ENCODE measurements at regions of chr5 and their contacts with region 1.

Region 1: DNA sequence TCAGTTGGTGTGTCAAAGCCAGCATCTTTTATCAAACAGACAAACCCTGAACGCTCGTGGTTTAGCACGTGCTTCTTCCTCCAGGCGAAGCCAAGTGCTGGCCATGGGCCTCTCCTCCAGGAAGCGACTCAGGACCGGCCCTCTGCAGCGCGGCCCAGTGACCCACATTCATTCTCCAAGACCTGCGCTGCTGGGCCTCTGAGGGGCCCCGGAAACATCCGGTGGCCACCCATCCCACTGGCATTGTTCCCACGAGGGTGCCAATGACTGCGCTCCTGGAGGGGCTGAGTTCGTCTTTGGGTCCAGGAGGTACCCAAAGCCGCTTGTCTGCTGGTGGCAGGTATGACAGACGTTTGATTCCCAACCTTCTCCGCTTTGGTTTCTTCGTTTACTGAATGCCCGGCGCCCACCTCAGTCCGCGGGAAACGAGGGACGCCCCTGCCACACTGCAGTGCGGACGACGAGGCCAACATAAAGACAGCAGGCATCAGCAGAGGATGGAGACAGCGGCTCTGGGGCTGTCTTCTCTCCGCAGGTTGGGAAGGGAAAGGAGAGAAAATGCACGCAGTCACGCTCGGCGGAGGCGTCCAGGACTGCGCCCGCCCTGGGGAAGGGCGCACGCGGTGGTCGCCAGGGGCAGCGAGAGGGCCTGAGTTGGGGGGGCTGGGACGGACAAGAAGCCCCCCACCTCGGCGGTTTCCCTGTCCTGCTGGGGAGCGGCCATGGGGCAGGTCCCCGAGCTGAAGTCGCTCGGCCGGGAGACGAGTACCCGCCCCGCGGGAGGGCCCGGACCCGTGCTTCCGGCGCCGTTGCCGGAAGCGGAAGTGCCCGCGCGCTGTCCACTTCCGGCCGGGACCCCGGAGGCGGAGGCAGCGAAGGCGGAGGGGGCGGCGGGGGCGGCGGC is at the start of gene EXOC3:
- DNase-seq: peak; percentile 60 to 83 (median 67)
- ATAC-seq: peak; percentile 87
- H3K4me3 ChIP-seq: peak within 1 kb of the TSS; percentile 88
- H3K4me3 Mint-ChIP-seq: peak within 1 kb of the TSS; percentile 89 to 98 (median 96)
- H3K27ac ChIP-seq: peak within 1 kb of the TSS; percentile 87
- H3K27ac Mint-ChIP-seq: peak within 1 kb of the TSS; percentile 88 to 98 (median 94)
- H3K4me1 ChIP-seq: peaks cover 12 to 18% of the 10 kb centered on the region in 2 donors
- H3K4me1 Mint-ChIP-seq: peaks cover 24 to 44% (median 32%) of the 10 kb centered on the region in 7 donors
- H3K27me3 ChIP-seq: no peaks in the 10 kb centered on the region
- H3K27me3 Mint-ChIP-seq: peaks cover 0 to 3% (median 0%) of the 10 kb centered on the region in 5 donors
- total RNA-seq, gene EXOC3: 79.1 to 105 (median 89.8) TPM

Region 2: GRCh38 chr5:217860-218456 is 224.6 kb before region 1 on chr5 and contains the starts of genes CCDC127 and SDHA:
- CTCF ChIA-PET with region 1: no interaction called
- POLR2A ChIA-PET with region 1: interaction called, 4 read pairs
- intact Hi-C with region 1: loop called (anchors 1 to 5 kb)
- DNase-seq: peak; percentile 94 to 100 (median 98)
- ATAC-seq: peak; percentile 90
- H3K4me3 ChIP-seq: peak within 1 kb of the TSS; percentile 65
- H3K4me3 Mint-ChIP-seq: peak within 1 kb of the TSS; percentile 93 to 97 (median 96)
- H3K27ac ChIP-seq: peak within 1 kb of the TSS; percentile 92
- H3K27ac Mint-ChIP-seq: peak within 1 kb of the TSS; percentile 87 to 97 (median 95)
- H3K4me1 ChIP-seq: peaks cover 13 to 14% of the 10 kb centered on the region in 2 donors
- H3K4me1 Mint-ChIP-seq: peaks cover 44 to 69% (median 57%) of the 10 kb centered on the region in 7 donors
- H3K27me3 ChIP-seq: no peaks in the 10 kb centered on the region
- H3K27me3 Mint-ChIP-seq: peaks cover 0 to 2% (median 0%) of the 10 kb centered on the region in 5 donors
- total RNA-seq, gene CCDC127: 2.9 to 9.7 (median 6.5) TPM
- total RNA-seq, gene SDHA: 120 to 180 (median 148) TPM

Region 3: DNA sequence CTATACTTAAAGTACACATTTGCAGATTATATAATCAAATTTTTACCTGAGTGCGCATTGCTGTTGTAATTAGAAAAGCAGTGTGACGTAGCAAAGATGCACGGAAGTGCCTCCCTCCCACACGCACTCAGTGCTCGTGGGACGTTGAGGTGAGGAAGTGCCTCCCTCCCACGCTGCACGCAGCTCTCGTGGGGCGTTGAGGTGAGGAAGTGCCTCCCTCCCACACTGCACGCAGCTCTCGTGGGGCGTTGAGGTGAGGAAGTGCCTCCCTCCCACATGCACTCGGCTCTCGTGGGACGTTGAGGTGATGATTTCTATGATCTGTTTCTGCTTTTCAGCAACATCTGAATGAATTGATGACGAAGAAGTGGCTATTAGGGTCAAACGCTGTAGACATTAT is 21.4 kb after region 1 on chr5:
- CTCF ChIA-PET with region 1: interaction called, 4 read pairs
- POLR2A ChIA-PET with region 1: interaction called, 9 read pairs
- intact Hi-C with region 1: loop called in 1 of 2 experiments (anchors 1 kb)
- DNase-seq: peak; percentile 52 to 94 (median 89)
- ATAC-seq: peak; percentile 99
- H3K4me3 ChIP-seq: no peak overlapping the region
- H3K4me3 Mint-ChIP-seq: peak overlapping the region; percentile 37 to 82 (median 70)
- H3K27ac ChIP-seq: peak overlapping the region; percentile 86
- H3K27ac Mint-ChIP-seq: peak overlapping the region; percentile 73 to 97 (median 95)
- H3K4me1 ChIP-seq: peaks cover 7 to 17% of the 10 kb centered on the region in 2 donors
- H3K4me1 Mint-ChIP-seq: peaks cover 6 to 44% (median 15%) of the 10 kb centered on the region in 7 donors
- H3K27me3 ChIP-seq: no peaks in the 10 kb centered on the region
- H3K27me3 Mint-ChIP-seq: no peaks in the 10 kb centered on the region

Region 4: DNA sequence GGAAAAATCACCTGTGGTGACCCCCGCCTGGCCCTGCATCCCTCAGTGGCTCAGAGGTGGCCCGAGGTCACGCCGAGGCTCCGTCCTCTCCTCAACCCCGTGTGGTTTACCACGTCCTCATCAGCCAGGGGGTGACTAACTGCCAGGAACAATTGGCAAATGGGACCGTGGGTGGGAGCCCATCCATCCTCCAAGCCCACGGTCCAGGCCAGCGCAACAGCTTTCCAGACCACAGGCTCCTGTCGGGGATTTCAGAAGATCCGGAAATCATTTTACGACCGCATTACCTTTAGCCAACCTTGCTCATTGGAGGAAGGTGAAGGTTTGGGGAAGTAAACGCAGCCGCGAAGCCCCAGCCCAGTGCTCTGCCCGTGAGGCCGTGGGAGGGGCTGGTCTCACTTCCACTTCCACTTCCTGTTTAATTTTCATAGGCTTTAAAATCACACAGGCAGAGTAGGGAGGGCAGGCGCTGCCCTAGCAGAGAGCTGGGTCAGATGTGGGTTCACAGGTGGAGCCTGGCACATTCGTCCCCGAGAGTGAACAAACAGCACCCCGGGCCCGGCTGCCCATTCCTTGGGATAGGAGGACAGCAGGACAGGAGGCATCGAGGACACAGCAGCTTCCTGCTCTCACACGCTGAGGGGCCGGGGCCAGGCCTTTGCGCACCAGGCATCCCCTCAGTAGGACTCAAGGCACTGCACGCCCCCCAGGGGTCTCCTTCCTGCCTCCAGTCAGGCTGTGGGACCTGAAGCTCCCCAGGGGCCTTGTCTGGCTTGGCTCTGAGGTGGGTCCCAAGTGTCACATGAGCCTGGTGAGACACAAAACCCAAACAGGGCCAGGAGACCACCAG is 101.5 kb after region 1 on chr5:
- CTCF ChIA-PET with region 1: no interaction called
- POLR2A ChIA-PET with region 1: no interaction called
- intact Hi-C with region 1: loop called in 1 of 2 experiments (anchors 1 kb)
- DNase-seq: peak in 7 of 9 donors; percentile 24 to 60 (median 50)
- ATAC-seq: peak; percentile 81
- H3K4me3 ChIP-seq: peak overlapping the region; percentile 48
- H3K4me3 Mint-ChIP-seq: peak overlapping the region; percentile 55 to 84 (median 76)
- H3K27ac ChIP-seq: peak overlapping the region; percentile 8
- H3K27ac Mint-ChIP-seq: peak overlapping the region; percentile 49 to 95 (median 84)
- H3K4me1 ChIP-seq: peaks cover 14 to 15% of the 10 kb centered on the region in 2 donors
- H3K4me1 Mint-ChIP-seq: peaks cover 7 to 18% (median 10%) of the 10 kb centered on the region in 7 donors
- H3K27me3 ChIP-seq: no peaks in the 10 kb centered on the region
- H3K27me3 Mint-ChIP-seq: peaks cover 3 to 23% (median 7%) of the 10 kb centered on the region in 5 donors

Region 5: DNA sequence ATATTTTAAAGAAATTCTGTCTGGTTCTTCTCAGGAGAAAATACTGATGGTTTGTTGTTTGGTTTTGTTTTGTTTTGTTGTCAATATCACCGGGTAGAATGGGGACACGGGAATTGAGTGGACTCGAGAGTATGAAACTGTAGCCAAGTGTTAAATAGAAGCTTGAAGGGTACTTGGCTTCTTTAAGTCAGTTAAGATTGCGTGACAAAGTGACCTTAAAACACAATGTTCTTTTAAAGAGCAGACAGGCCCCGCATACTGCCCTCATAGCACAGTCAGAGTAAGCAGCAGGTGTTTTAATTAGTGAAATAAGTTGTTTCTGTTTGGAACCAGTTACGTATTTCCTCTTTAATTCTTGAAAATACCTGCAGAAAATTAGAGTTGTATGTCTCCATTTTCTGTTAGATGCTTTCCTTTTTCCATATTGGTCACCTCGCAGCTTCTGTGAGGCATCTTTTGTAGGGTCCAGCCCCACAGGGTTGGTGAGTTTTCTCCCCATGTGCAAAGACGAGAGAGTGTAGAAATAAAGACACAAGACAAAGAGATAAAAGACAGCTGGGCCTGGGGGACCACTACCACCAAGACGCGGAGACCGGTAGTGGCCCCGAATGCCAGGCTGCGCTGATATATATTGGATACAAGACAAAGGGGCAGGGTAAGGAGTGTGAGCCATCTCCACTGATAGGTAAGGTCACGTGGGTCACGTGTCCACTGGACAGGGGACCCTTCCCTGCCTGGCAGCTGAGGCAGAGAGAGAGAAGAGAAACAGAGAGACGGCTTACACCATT is 459.7 kb after region 1 on chr5:
- CTCF ChIA-PET with region 1: no interaction called
- POLR2A ChIA-PET with region 1: no interaction called
- intact Hi-C with region 1: loop called in 1 of 2 experiments (anchors 2 kb)
- DNase-seq: no peak
- ATAC-seq: no peak
- H3K4me3 ChIP-seq: no peak overlapping the region
- H3K4me3 Mint-ChIP-seq: no peak overlapping the region
- H3K27ac ChIP-seq: no peak overlapping the region
- H3K27ac Mint-ChIP-seq: no peak overlapping the region
- H3K4me1 ChIP-seq: no peaks in the 10 kb centered on the region
- H3K4me1 Mint-ChIP-seq: no peaks in the 10 kb centered on the region
- H3K27me3 ChIP-seq: no peaks in the 10 kb centered on the region
- H3K27me3 Mint-ChIP-seq: no peaks in the 10 kb centered on the region

Measured in naive thymus-derived CD4-positive, alpha-beta T cell (primary cell).